Activated T-helper 1 cell treated with anti-CD3 and anti-CD28 coated beads, Interleukin-12 subunit alpha, Interleukin-12 subunit beta, Interleukin-2, Interleukin-4 antibody, amounts not matched to agents 30 ng/mL and 10 ng/mL and 1 ng/mL, durations not matched to agents 14 hours and 24 hours and 36 hours (primary cell): ENCODE measurements at regions of chr13 and their contacts with region 1.

Region 1: DNA sequence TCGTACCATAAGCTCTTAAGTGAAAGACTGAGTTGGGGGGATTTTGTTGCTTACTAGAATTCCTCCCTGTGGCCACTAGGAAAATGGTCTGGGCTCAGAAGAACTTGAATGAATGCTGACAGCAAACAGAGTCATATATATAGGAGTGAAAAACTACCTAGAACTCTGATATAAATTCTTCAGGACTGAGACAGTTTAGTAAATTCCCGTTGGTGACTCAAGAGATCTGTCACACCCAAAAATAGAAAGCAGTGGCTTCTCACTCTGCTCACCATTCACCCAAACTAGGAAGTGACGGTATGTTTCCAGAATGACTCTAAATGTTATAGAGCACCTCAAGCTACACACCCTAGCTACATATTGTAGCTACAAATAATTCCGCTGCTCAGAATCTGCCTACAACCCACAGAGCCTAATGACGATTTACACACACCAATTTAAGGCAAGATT is 116.2 kb downstream of the TBC1D4 start:
- DNase-seq: peak; percentile 43
- H3K4me3 Mint-ChIP-seq: peak overlapping the region; percentile 65
- H3K27ac Mint-ChIP-seq: peak overlapping the region; percentile 96
- H3K4me1 Mint-ChIP-seq: peaks cover 57% of the 10 kb centered on the region
- H3K27me3 Mint-ChIP-seq: no peaks in the 10 kb centered on the region

Region 2: GRCh38 chr13:75319254-75319653 is 46.5 kb before region 1 on chr13:
- intact Hi-C with region 1: loop called (anchors 1 kb)
- DNase-seq: no peak
- H3K4me3 Mint-ChIP-seq: peak overlapping the region; percentile 9
- H3K27ac Mint-ChIP-seq: peak overlapping the region; percentile 99
- H3K4me1 Mint-ChIP-seq: peaks cover 68% of the 10 kb centered on the region
- H3K27me3 Mint-ChIP-seq: no peaks in the 10 kb centered on the region

Region 3: GRCh38 chr13:75482070-75482819 is 116.5 kb after region 1 on chr13 and contains the start of gene TBC1D4:
- intact Hi-C with region 1: loop called (anchors 1 kb)
- DNase-seq: peak; percentile 40
- H3K4me3 Mint-ChIP-seq: peak within 1 kb of the TSS; percentile 99
- H3K27ac Mint-ChIP-seq: peak within 1 kb of the TSS; percentile 89
- H3K4me1 Mint-ChIP-seq: peaks cover 45% of the 10 kb centered on the region
- H3K27me3 Mint-ChIP-seq: peaks cover 49% of the 10 kb centered on the region
- total RNA-seq, gene TBC1D4: 66.6 and 73.5 TPM in 2 replicates

Region 4: GRCh38 chr13:75537401-75538365 is 171.9 kb after region 1 on chr13 and contains the start of gene COMMD6:
- intact Hi-C with region 1: loop called (anchors 2 kb)
- DNase-seq: peak; percentile 60
- H3K4me3 Mint-ChIP-seq: peak within 1 kb of the TSS; percentile 94
- H3K27ac Mint-ChIP-seq: peak within 1 kb of the TSS; percentile 87
- H3K4me1 Mint-ChIP-seq: peaks cover 44% of the 10 kb centered on the region
- H3K27me3 Mint-ChIP-seq: no peaks in the 10 kb centered on the region
- total RNA-seq, gene COMMD6: 87.1 and 88.7 TPM in 2 replicates

Region 5: DNA sequence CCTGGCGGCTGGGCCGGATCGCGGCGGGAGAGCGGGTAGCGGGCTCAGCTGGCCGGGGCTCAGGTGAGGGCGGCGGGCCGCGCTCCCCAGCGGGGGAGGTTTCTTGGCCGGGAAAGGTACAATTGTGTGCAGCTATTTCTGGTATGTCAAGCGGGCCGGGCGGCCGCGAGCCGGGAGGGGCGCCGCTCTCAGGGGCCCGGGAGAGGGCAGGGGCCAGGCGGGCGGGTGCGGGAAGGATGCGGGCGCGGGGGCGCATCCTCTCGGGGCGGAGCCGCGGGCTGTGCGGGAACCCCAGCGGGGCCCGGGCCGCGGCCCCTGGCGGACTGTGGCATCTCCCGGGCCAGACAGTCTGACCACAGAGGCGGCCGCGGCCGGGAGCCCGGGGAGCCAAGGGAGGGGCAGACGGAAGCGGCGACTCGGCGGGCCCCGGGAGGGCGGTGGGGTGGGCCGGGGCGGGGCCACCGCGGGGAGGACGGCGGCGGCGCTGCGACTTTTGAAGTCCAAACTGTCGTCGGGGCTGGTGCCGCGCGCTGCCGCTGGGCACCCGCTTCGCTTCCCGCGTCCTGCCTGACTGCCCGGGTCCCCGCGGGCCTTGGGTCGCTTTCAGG is 270.2 kb after region 1 on chr13 and contains the start of gene LMO7:
- intact Hi-C with region 1: loop called (anchors 2 kb)
- DNase-seq: peak; percentile 37
- H3K4me3 Mint-ChIP-seq: peak within 1 kb of the TSS; percentile 76
- H3K27ac Mint-ChIP-seq: no peak within 1 kb of the TSS
- H3K4me1 Mint-ChIP-seq: peaks cover 16% of the 10 kb centered on the region
- H3K27me3 Mint-ChIP-seq: peaks cover 26% of the 10 kb centered on the region
- total RNA-seq, gene LMO7: 2.9 and 3.2 TPM in 2 replicates